Breast epithelium (tissue), 4 donors: ENCODE measurements at regions of chr3 and their contacts with region 1.

Region 1: DNA sequence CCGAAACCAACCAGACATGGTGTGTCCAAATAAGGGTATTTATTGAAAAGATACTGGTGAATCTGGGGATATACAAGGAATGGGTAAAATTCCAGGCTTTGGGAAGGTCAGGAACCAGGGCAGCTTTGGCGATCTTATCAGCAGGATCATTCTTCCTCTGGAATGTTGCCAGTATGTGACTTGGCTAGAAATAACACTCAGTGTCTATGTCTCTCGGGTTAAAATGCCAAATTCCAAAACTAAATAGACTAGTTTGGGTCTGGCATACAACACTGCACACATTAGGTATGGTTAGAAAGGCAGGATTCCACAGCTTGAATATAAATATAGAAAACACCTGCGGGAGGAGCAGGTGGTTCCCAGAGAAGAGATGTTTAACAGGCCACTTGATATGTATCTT is 220.2 kb upstream of the CD96 start:
- DNase-seq: no peak
- H3K4me3 ChIP-seq: no peak overlapping the region
- H3K27ac ChIP-seq: no peak overlapping the region
- H3K4me1 ChIP-seq: no peaks in the 10 kb centered on the region
- H3K27me3 ChIP-seq: no peaks in the 10 kb centered on the region
- CTCF ChIP-seq: no peak
- POLR2A ChIP-seq: no peak

Region 2: GRCh38 chr3:111252779-111253178 is 69.0 kb before region 1 on chr3:
- intact Hi-C with region 1: no loop called
- DNase-seq: no peak
- H3K4me3 ChIP-seq: no peak overlapping the region
- H3K27ac ChIP-seq: no peak overlapping the region
- H3K4me1 ChIP-seq: no peaks in the 10 kb centered on the region
- H3K27me3 ChIP-seq: no peaks in the 10 kb centered on the region
- CTCF ChIP-seq: no peak
- POLR2A ChIP-seq: no peak

Region 3: GRCh38 chr3:111285694-111286093 is 36.1 kb before region 1 on chr3:
- intact Hi-C with region 1: no loop called
- DNase-seq: no peak
- H3K4me3 ChIP-seq: no peak overlapping the region
- H3K27ac ChIP-seq: no peak overlapping the region
- H3K4me1 ChIP-seq: no peaks in the 10 kb centered on the region
- H3K27me3 ChIP-seq: no peaks in the 10 kb centered on the region
- CTCF ChIP-seq: no peak
- POLR2A ChIP-seq: no peak

Region 4: GRCh38 chr3:111362381-111363009 is 40.7 kb after region 1 on chr3:
- intact Hi-C with region 1: loop called (anchors 2 kb)
- DNase-seq: no peak
- H3K4me3 ChIP-seq: no peak overlapping the region
- H3K27ac ChIP-seq: no peak overlapping the region
- H3K4me1 ChIP-seq: no peaks in the 10 kb centered on the region
- H3K27me3 ChIP-seq: no peaks in the 10 kb centered on the region
- CTCF ChIP-seq: no peak
- POLR2A ChIP-seq: no peak

Region 5: DNA sequence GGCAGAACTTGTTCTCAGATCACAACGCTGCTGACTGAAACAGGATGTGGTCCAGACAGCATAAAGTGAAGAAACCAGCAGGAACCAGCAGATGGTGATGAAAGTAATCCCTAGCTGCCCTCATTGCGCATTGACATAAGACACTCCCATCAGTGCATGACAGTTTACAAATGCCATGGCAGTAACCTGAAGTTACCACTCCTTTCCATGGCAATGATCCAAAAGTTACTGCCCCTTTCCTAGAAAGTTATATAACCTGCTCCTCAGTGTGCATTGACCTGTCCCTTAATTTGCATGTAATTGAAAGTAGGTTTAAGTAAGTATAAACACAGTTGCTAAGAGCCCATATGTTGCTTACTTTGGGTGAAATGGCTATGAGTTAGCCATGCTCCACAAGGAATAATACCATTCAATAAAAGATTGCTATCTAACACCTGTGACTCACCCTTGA is 71.1 kb after region 1 on chr3:
- intact Hi-C with region 1: no loop called
- DNase-seq: no peak
- H3K4me3 ChIP-seq: no peak overlapping the region
- H3K27ac ChIP-seq: no peak overlapping the region
- H3K4me1 ChIP-seq: no peaks in the 10 kb centered on the region
- H3K27me3 ChIP-seq: no peaks in the 10 kb centered on the region
- CTCF ChIP-seq: no peak
- POLR2A ChIP-seq: no peak